Pancreas (tissue), 10 donors: ENCODE measurements at regions of chr7 and their contacts with region 1.

Region 1: GRCh38 chr7:992709-993607 is 10.0 kb downstream of the CYP2W1 start:
- DNase-seq: peak; percentile 96 to 100 (median 98)
- ATAC-seq: peak; percentile 94 to 98 (median 97)
- H3K4me3 ChIP-seq: no peak overlapping the region
- H3K27ac ChIP-seq: no peak overlapping the region
- H3K4me1 ChIP-seq: no peaks in the 10 kb centered on the region
- H3K27me3 ChIP-seq: no peaks in the 10 kb centered on the region
- CTCF ChIP-seq: peak; percentile 98 to 100 (median 98)

Region 2: DNA sequence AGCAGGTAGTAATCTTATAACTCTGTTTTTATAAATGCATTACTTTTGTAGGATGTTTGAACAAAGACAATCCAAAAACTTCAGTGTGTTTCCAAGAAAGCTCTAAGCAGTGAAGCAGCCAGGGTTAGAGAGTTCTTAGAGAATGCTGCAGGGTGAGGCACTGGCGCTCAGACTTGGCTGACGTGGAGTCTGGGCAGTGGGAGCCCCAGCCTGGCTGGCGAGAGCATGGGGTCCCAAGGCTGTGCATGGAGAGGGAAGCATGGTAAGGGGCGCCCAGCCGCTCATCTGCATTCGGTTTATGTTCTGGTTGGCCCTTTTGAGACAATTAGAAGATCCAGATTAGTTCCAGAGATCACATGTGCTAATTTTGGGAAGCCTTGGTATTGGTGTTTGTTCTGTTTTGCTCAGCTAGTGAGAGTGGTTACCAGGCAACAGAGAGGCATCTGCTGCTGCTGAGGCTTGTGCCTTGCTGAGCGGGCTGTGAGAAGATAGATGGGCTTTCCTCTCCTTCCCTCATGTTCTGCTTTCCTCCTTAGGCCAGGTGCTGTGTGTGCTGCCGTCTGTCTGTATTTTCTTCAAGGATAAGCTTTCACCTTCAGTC is 150.4 kb before region 1 on chr7:
- intact Hi-C with region 1: no loop called
- DNase-seq: peak in 1 of 6 donors; percentile 8
- ATAC-seq: peak in 3 of 4 donors; percentile 35 to 75 (median 69)
- H3K4me3 ChIP-seq: no peak overlapping the region
- H3K27ac ChIP-seq: no peak overlapping the region
- H3K4me1 ChIP-seq: no peaks in the 10 kb centered on the region
- H3K27me3 ChIP-seq: no peaks in the 10 kb centered on the region
- CTCF ChIP-seq: no peak

Region 3: DNA sequence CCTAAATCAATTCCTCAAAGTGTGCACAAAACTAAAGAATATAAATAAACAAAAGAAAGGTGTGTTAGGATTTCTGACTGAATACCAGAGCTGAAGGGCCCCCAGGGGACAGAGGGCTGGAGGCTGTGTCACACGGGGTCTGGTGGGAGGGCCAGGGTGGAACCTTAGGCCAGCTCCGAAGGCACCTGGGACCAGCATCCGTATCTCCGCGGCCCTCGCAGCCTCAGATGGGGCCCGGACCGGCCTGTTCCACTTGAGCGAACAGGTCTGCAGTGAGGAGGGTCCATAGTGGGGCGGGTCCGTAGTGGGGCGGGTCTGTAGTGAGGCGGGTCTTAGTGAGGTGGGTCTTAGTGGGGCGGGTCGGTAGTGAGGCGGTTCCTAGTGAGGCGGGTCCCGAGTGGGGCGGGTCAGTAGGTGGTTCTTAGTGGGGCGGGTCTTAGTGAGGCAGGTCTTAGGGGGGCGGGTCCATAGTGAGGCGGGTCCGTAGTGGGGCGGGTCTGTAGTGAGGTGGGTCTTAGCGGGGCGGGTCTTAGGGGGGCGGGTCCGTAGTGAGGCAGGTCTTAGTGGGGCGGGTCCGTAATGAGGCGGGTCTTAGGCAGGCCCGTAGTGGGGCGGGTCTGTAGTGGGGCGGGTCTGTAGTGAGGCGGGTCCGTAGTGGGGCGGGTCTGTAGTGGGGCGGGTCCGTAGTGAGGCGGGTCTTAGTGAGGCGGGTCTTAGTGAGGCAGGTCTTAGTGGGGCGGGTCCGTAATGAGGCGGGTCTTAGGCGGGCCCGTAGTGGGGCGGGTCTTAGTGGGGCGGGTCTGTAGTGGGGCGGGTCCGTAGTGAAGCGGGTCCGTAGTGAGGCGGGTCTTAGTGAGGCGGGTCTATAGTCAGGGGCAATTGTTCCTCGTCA is 66.5 kb after region 1 on chr7:
- intact Hi-C with region 1: loop called in 2 of 3 experiments (anchors 5 kb)
- DNase-seq: peak in 5 of 6 donors; percentile 61 to 76 (median 66)
- ATAC-seq: peak in 3 of 4 donors; percentile 57 to 83 (median 83)
- H3K4me3 ChIP-seq: peak overlapping the region in 1 of 4 donors; percentile 29
- H3K27ac ChIP-seq: no peak overlapping the region
- H3K4me1 ChIP-seq: peaks cover 0 to 9% (median 0%) of the 10 kb centered on the region in 3 donors
- H3K27me3 ChIP-seq: no peaks in the 10 kb centered on the region
- CTCF ChIP-seq: no peak

Region 4: GRCh38 chr7:1065263-1066260 is 72.6 kb after region 1 on chr7:
- intact Hi-C with region 1: loop called (anchors 5 kb)
- DNase-seq: peak; percentile 69 to 94 (median 88)
- ATAC-seq: peak; percentile 95 to 98 (median 97)
- H3K4me3 ChIP-seq: no peak overlapping the region
- H3K27ac ChIP-seq: no peak overlapping the region
- H3K4me1 ChIP-seq: peaks cover 0 to 3% (median 0%) of the 10 kb centered on the region in 3 donors
- H3K27me3 ChIP-seq: no peaks in the 10 kb centered on the region
- CTCF ChIP-seq: peak; percentile 80 to 96 (median 87)

Region 5: GRCh38 chr7:1144269-1144771 is 151.4 kb after region 1 on chr7:
- intact Hi-C with region 1: loop called in 1 of 3 experiments (anchors 10 kb)
- DNase-seq: peak in 3 of 6 donors; percentile 42 to 58 (median 58)
- ATAC-seq: peak; percentile 83 to 95 (median 92)
- H3K4me3 ChIP-seq: no peak overlapping the region
- H3K27ac ChIP-seq: no peak overlapping the region
- H3K4me1 ChIP-seq: no peaks in the 10 kb centered on the region
- H3K27me3 ChIP-seq: no peaks in the 10 kb centered on the region
- CTCF ChIP-seq: peak in 3 of 4 donors; percentile 8 to 15 (median 14)